Right cardiac atrium (tissue), 5 donors: ENCODE measurements at regions of chr12 and their contacts with region 1.

Region 1: GRCh38 chr12:80412369-80412953 is 31.6 kb upstream of the PTPRQ start:
- DNase-seq: no peak
- ATAC-seq: peak; percentile 46 to 71
- H3K4me3 ChIP-seq: no peak overlapping the region
- H3K27ac ChIP-seq: no peak overlapping the region
- H3K4me1 ChIP-seq: no peaks in the 10 kb centered on the region
- H3K27me3 ChIP-seq: no peaks in the 10 kb centered on the region

Region 2: GRCh38 chr12:80763874-80764273 is 351.4 kb after region 1 on chr12:
- intact Hi-C with region 1: loop called (anchors 5 to 10 kb)
- DNase-seq: no peak
- ATAC-seq: no peak
- H3K4me3 ChIP-seq: no peak overlapping the region
- H3K27ac ChIP-seq: no peak overlapping the region
- H3K4me1 ChIP-seq: no peaks in the 10 kb centered on the region
- H3K27me3 ChIP-seq: no peaks in the 10 kb centered on the region

Region 3: GRCh38 chr12:80912901-80913694 is 500.6 kb after region 1 on chr12:
- intact Hi-C with region 1: no loop called
- DNase-seq: no peak
- ATAC-seq: no peak
- H3K4me3 ChIP-seq: peak overlapping the region; percentile 9
- H3K27ac ChIP-seq: no peak overlapping the region
- H3K4me1 ChIP-seq: peaks cover 1% of the 10 kb centered on the region
- H3K27me3 ChIP-seq: no peaks in the 10 kb centered on the region

Region 4: DNA sequence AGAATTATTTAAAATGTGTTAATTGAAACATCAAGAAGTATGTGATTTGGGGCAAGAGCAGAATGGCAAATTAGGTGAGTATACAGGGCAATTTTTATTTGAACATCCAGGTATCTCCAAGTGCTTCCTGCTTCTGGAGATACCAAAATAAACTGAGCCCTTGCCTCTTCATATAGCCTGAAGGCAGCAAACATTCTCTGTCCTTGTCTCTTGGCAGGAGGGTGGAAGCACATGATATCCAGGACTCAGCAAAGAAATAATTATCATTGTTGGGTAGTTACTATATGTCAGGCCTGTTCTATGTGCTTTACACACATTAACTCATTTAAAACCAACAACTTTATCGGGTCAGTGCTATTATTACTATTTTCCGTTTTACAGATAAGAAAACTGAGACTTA is 512.8 kb after region 1 on chr12:
- intact Hi-C with region 1: loop called in 1 of 4 experiments (anchors 10 kb)
- DNase-seq: no peak
- ATAC-seq: peak in 1 of 2 donors; percentile 31
- H3K4me3 ChIP-seq: no peak overlapping the region
- H3K27ac ChIP-seq: no peak overlapping the region
- H3K4me1 ChIP-seq: peaks cover 3% of the 10 kb centered on the region
- H3K27me3 ChIP-seq: no peaks in the 10 kb centered on the region